Activated naive CD4-positive, alpha-beta T cell treated with anti-CD3 and anti-CD28 coated beads for 36 hours (primary cell): ENCODE measurements at regions of chr1 and their contacts with region 1.

Region 1: DNA sequence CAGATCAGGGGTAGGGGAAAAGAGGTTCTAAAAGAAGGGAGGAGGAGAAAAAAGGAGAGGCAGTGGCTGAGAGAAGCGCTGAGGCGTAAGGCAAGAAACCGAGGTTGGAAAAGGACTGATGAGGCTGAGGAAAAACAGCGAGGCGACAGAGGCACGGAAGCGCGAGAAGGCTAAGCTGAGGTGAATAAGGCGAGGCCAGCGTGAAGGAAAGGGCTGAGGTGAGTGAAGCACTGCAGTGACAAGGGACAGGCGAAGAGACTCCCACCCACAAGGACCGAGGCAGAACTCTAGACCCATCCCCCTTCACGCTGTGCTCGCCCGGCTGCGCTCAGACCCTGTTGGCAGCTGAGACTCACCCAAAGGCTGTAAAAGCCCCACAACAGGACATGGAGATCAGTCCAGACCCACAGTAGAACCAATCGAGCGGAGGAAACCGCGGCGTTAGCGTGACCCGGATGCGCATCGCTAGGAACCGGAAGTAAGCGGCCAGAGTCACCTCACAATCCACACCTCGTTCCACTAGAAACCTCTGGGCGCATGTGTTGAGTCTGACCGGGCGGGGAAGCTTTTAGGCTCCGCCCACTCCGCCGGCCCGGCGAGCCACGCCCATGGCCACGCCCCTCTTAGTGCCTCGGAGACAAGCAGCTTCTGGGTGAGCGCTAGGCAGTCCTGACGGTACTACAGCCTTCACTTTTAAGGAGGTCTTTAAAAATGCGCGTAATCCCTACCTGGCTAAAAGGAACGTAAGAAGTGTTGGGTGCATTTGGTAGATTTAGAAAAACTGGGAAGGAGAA is at the start of gene EYA3:
- DNase-seq: peak; percentile 99
- H3K4me3 Mint-ChIP-seq: peak within 1 kb of the TSS; percentile 91
- H3K27ac Mint-ChIP-seq: peak within 1 kb of the TSS; percentile 87
- H3K4me1 Mint-ChIP-seq: peaks cover 25% of the 10 kb centered on the region
- H3K27me3 Mint-ChIP-seq: peaks cover 3% of the 10 kb centered on the region
- total RNA-seq, gene EYA3: 25.4 to 25.9 TPM

Region 2: GRCh38 chr1:27630859-27631491 is 457.4 kb before region 1 on chr1:
- CTCF ChIA-PET with region 1: no interaction called
- intact Hi-C with region 1: no loop called
- DNase-seq: no peak
- H3K4me3 Mint-ChIP-seq: no peak overlapping the region
- H3K27ac Mint-ChIP-seq: no peak overlapping the region
- H3K4me1 Mint-ChIP-seq: peaks cover 61% of the 10 kb centered on the region
- H3K27me3 Mint-ChIP-seq: no peaks in the 10 kb centered on the region

Region 3: DNA sequence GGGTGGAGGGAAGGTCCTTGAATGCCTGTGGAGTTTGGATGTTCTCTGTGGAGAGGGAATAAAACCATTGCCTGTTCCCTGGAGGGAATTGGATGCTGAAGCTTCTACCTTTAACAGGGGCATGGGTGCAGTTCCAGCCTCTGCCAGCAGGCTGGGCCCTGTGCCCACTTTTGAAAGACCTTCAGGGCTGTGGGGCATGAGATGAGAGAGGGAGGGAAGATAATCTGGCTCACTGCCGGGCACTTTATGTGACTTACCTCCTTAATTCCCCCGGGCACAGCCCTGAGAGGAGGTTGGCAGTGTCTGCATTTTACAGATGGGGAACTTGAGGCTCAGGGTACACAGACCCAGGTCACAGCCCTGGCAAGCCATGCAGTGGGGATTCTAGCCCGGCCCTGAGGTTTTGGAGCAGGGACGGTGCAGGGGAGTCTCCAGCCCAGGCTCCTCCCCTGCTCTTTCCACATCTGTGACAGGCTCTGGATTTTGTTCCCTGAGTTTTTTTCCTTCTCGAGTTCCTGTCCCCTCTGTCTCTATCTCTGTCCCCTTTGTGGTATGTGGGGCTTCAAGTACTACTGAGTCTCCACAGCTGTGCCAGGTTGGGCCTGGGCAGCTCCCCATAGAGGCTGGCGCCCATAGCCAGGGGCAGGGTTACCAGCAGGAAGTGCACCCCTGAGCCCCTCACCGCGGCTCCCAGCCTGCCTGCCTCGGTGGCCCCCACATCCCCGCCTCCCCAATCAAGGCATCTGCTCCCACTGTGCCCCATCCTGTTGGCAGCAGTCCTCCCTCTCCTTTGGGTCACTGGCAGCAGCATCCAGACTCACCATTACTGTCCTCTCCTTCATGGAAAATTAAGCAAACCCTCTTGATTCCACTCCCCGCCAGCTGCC is 230.1 kb before region 1 on chr1:
- CTCF ChIA-PET with region 1: no interaction called
- intact Hi-C with region 1: loop called (anchors 1 kb)
- DNase-seq: peak; percentile 93
- H3K4me3 Mint-ChIP-seq: no peak overlapping the region
- H3K27ac Mint-ChIP-seq: no peak overlapping the region
- H3K4me1 Mint-ChIP-seq: peaks cover 14% of the 10 kb centered on the region
- H3K27me3 Mint-ChIP-seq: no peaks in the 10 kb centered on the region

Region 4: DNA sequence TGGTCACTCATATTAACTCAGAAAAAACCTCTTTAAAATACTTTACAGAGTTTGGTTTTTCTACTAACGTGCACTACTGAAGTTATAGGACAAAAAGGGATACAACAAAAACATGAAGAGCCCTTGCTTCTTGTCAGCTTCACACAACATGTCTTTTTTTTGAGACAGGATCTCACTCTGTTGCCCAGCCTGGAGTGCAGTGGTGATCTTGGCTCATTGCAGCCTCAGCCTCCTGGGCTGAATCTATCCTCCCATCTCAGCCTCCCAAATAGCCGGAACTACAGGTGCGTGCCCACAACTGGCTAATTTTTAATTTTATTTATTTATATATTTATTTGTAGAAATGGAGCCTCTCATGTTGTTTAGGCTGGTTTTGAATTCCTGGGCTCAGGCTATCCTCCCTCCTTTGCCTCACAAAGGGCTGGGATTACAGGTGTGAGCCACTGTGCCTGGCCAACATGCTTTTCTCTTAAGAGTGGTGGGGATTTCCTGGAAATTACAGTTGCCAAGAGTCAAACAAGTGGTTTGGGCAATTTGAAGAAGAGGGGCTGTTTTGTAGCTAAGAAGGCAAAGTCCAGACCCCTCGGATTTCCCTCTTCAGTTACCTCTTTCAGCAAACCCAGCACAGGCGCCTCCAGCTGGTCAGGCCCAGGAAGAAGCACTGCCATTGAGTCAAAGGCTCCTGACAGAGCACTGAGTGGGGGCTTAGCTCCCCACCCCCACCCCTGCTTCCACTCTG is 160.0 kb before region 1 on chr1:
- CTCF ChIA-PET with region 1: no interaction called
- intact Hi-C with region 1: no loop called
- DNase-seq: no peak
- H3K4me3 Mint-ChIP-seq: no peak overlapping the region
- H3K27ac Mint-ChIP-seq: no peak overlapping the region
- H3K4me1 Mint-ChIP-seq: no peaks in the 10 kb centered on the region
- H3K27me3 Mint-ChIP-seq: no peaks in the 10 kb centered on the region

Region 5: DNA sequence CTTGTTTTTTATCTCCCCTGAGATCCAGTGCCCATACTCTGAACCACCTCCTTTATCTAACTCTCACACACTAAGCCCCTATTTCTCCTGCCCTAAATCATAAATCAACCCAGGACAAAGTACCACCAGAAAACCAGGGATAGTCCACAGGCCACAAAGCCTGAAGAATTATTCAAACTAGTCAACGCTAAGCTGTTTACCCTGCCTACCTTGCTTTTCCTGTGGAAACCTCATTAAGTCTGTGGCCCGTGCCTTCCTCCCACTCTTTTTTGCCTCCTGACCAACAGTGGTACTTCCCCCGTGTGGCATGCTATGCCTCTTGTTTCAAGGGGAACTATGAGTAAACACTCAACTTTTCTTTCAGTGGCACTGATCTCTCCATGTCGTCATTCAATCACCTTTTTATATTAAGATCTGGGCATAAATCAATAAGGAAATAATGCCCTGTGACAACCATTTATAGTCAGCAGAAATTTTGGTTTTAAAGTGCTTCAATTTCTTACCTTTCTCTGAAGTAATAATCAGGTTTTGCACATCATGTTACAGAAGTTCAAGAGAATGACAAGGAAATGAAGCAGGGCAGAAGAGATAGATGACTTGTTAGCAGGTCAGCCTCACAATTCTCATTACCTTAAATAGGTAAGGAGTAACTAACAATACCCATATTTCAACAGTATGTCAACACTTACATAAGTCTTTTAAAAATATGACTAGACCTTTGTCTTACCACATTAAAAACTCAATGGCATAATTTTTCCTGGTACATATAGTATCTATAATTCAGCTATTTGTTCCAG is 32.0 kb before region 1 on chr1:
- CTCF ChIA-PET with region 1: interaction called, 12 read pairs
- intact Hi-C with region 1: loop called (anchors 1 kb)
- DNase-seq: peak; percentile 85
- H3K4me3 Mint-ChIP-seq: no peak overlapping the region
- H3K27ac Mint-ChIP-seq: peak overlapping the region; percentile 59
- H3K4me1 Mint-ChIP-seq: peaks cover 45% of the 10 kb centered on the region
- H3K27me3 Mint-ChIP-seq: no peaks in the 10 kb centered on the region

Region 6: GRCh38 chr1:28144203-28145135 is 56.1 kb after region 1 on chr1:
- CTCF ChIA-PET with region 1: interaction called, 5 read pairs
- intact Hi-C with region 1: loop called (anchors 1 kb)
- DNase-seq: peak; percentile 77
- H3K4me3 Mint-ChIP-seq: no peak overlapping the region
- H3K27ac Mint-ChIP-seq: no peak overlapping the region
- H3K4me1 Mint-ChIP-seq: peaks cover 16% of the 10 kb centered on the region
- H3K27me3 Mint-ChIP-seq: peaks cover 7% of the 10 kb centered on the region

Region 7: DNA sequence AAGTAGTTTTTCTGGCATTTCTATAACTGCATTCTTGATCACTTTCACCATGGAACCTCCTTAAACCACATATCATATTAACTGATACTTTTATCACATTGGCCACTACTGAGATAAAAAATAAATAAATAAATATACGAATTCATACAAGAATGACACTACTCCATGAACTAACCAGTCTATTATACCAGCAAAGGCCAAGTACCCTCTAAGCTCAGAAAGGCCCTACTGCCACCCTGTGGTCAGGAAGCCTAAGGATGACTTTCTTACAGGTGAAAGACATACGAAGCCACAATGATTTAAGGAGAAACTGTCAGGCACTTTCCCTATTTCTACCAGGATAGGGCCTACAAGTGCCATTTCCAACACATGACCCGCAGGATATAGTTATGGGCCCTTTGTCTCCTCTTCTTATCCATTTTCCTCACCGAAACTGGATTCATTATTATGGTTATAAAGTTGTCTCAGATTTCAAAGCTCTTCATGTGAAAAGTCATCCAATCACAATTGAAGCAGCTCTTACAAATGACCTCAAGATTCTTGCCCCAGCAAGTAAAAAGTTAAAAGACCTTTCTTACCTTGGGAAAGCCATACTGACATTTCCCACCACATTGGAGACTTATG is 120.6 kb after region 1 on chr1:
- CTCF ChIA-PET with region 1: interaction called, 132 read pairs
- intact Hi-C with region 1: loop called (anchors 1 kb)
- DNase-seq: peak; percentile 82
- H3K4me3 Mint-ChIP-seq: no peak overlapping the region
- H3K27ac Mint-ChIP-seq: no peak overlapping the region
- H3K4me1 Mint-ChIP-seq: peaks cover 2% of the 10 kb centered on the region
- H3K27me3 Mint-ChIP-seq: no peaks in the 10 kb centered on the region

Region 8: GRCh38 chr1:28428012-28428411 is 339.6 kb after region 1 on chr1:
- CTCF ChIA-PET with region 1: no interaction called
- intact Hi-C with region 1: no loop called
- DNase-seq: no peak
- H3K4me3 Mint-ChIP-seq: no peak overlapping the region
- H3K27ac Mint-ChIP-seq: no peak overlapping the region
- H3K4me1 Mint-ChIP-seq: peaks cover 9% of the 10 kb centered on the region
- H3K27me3 Mint-ChIP-seq: no peaks in the 10 kb centered on the region

Region 9: GRCh38 chr1:28552758-28553663 is 464.6 kb after region 1 on chr1 and contains the start of gene TRNAU1AP:
- CTCF ChIA-PET with region 1: no interaction called
- intact Hi-C with region 1: loop called (anchors 1 kb)
- DNase-seq: peak; percentile 99
- H3K4me3 Mint-ChIP-seq: peak within 1 kb of the TSS; percentile 94
- H3K27ac Mint-ChIP-seq: peak within 1 kb of the TSS; percentile 97
- H3K4me1 Mint-ChIP-seq: peaks cover 19% of the 10 kb centered on the region
- H3K27me3 Mint-ChIP-seq: no peaks in the 10 kb centered on the region
- total RNA-seq, gene TRNAU1AP: 36.7 to 39.4 TPM